BJ (cell line): ENCODE measurements at regions of chr22 and their contacts with region 1.

Region 1: DNA sequence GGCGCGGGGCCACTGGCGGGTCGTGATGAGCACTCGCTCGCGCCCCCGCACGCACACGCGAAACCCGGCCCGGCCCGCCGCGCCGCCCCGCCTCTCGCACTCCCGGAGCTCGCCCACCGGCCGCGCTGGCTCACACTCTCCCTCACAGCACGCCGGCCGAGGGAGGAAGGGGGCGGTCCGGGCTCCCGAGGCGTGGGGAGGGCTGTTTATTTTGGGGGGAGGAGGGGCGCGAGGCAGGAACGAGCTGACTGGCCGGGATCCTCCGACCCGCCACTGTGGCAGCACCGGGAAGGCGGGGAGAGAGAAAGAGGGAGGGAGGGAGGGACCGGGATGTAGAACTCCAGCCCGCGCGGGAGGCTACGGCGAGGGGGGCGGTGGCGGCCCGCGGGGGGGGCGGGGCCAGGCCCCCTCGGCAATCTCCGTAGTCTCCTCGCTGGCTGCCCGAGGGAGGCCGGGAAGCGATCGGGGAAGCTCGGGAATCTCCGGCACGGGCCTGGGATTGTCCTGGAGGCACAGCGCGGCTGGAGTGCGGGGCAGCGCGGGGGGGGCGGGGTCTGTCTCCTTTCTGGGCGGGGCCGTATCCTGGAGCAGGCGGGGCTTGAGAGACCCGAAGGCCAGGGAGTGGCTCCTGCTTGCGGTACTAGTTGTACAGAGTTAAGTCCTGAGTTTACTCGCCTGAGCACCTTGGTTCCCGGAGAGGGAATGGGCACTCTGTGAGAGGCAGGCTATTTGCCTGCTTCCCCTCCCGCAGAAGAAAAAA is at the start of gene RBFOX2:
- DNase-seq: peak; percentile 75
- H3K4me3 ChIP-seq: peak within 1 kb of the TSS; percentile 97
- H3K27me3 ChIP-seq: no peaks in the 10 kb centered on the region
- CTCF ChIP-seq: no peak
- polyA plus RNA-seq, gene RBFOX2: 221 and 222 TPM in 2 replicates

Region 2: GRCh38 chr22:35921777-35922176 is 107.0 kb before region 1 on chr22:
- CTCF ChIA-PET with region 1: interaction called, 4 read pairs
- POLR2A ChIA-PET with region 1: interaction called, 14 read pairs
- DNase-seq: peak; percentile 63
- H3K4me3 ChIP-seq: no peak overlapping the region
- H3K27me3 ChIP-seq: no peaks in the 10 kb centered on the region
- CTCF ChIP-seq: peak; percentile 70

Region 3: DNA sequence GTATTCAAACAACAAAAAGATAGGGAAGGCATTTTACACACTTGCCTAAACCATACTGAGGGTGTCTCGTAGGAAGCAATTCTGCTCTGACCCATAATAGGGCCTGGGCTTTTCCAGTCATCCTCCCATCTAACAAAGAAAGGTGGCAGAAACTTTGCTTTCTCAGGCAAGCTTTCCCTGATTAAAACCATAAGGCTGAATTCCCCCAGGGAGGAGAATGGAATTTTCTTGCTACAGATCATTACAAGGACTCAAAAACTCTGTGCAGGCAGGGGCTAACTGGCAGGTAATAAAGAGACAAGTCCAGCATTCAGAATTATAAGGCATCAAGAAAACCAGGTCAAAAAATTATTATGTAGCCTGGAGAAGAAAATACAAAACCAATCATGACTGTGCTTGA is 90.6 kb before region 1 on chr22:
- CTCF ChIA-PET with region 1: interaction called, 3 read pairs
- POLR2A ChIA-PET with region 1: interaction called, 12 read pairs
- DNase-seq: no peak
- H3K4me3 ChIP-seq: no peak overlapping the region
- H3K27me3 ChIP-seq: no peaks in the 10 kb centered on the region
- CTCF ChIP-seq: no peak